ENCODE measurements at regions of chr4 and their contacts with region 1.

Region 1: DNA sequence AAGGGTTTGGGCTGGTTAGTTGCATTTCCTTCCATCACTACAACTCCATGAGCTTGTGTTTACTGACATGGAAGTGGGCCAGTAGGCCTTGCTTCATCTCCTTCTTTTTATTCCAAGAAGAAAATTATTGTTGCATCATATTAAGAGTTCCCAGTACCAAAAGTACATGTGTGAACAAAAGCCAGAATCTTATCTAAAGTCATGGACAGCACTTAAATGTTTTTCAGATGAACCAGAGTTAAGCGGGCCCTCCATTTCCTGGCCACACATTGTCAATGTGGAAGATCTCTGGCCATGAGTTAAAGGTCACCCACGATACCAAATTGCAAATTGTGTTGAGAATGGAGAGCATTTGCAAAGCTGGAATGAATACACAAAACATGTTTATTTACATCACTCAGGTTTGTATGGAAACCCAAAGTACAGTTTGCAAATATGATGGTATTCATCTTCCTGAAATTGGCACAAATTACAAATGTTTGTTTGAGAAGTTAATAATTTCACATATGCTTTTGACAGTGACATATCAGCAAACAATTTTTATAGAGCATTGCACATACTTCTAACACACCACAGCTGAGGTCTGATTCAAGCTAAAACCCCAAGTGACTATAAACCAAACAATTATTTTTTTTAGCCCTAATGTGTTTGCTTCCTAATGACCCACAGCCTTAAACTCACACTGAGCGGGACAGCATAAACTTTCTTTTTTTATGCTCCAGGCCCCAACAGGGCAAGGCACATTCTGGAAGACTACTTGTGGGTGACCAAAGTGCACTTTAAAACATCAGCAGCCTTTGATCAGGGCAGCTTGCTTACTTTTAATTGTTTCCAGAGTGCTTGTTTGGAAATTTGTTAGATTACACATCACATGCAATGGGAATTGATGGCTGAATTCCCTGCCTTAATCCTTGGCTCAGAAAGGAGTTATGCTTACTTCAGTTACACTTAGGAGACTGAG is 502.9 kb upstream of the SLIT2 start:
- DNase-seq: peak in 1 of 2 donors; percentile 51
- ATAC-seq: peak; percentile 65 to 87 (median 78)
- H3K4me3 ChIP-seq: no peak overlapping the region
- H3K27ac ChIP-seq: peak overlapping the region in 6 of 10 donors; percentile 5 to 65 (median 30)
- H3K4me1 ChIP-seq: peaks cover 0 to 15% (median 0%) of the 10 kb centered on the region in 9 donors
- H3K27me3 ChIP-seq: no peaks in the 10 kb centered on the region
- CTCF ChIP-seq: no peak

Region 2: DNA sequence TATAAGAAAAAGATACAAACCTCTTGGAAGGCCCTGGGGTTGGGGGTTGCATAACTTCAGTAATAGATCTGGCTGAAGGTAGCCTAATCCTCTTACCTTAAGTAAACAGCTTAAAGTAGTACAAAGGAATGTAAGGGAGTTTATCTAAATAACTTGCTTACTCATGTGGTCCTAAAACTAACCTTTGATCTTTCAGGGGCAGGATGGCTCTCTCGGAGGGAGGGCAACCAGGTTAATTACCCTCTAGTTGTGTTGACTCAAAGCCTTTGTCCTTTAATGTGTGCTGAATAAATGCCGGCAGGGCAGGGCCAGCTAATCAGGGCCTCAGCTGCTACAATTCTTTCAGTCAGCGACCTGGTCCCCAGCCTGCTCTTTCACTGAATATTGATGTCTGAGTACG is 319.1 kb before region 1 on chr4:
- intact Hi-C with region 1: no loop called
- DNase-seq: no peak
- ATAC-seq: no peak
- H3K4me3 ChIP-seq: no peak overlapping the region
- H3K27ac ChIP-seq: no peak overlapping the region
- H3K4me1 ChIP-seq: no peaks in the 10 kb centered on the region
- H3K27me3 ChIP-seq: no peaks in the 10 kb centered on the region
- CTCF ChIP-seq: no peak

Region 3: DNA sequence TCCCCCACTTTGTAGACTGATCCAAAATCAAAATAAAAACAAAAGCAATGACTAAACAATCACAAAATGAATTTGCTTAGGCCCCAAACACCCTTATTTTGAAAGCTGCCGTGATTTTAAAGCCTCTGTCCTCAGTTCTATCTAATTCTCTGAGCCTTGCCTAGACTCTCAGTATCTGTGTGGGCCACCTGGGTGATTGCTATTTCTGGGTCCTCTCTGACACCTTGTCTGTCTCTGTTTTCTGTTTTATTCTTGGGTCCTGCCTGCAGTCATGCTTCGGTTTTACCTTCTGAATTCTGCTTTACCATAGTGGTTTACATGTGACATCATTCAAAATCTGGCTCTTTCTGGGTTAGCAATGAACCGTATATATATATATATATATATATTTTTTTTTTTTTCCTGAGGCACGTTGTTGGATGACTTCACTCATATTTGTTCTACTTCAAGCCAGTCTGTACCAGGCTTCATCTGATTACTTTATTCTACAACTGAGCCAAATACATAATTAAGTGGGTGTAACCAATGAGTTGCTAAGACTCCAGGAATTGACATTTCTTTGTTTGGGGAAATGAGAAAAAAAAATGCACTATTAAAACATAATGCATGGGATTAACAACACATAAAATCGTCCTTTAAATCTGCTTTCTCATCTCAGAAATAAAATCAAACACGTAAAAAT is 207.8 kb before region 1 on chr4:
- intact Hi-C with region 1: loop called in 1 of 10 experiments (anchors 10 kb)
- DNase-seq: no peak
- ATAC-seq: no peak
- H3K4me3 ChIP-seq: no peak overlapping the region
- H3K27ac ChIP-seq: no peak overlapping the region
- H3K4me1 ChIP-seq: no peaks in the 10 kb centered on the region
- H3K27me3 ChIP-seq: no peaks in the 10 kb centered on the region
- CTCF ChIP-seq: no peak

Region 4: GRCh38 chr4:19711871-19712270 is 36.9 kb before region 1 on chr4:
- intact Hi-C with region 1: loop called in 1 of 10 experiments (anchors 2 kb)
- DNase-seq: no peak
- ATAC-seq: no peak
- H3K4me3 ChIP-seq: no peak overlapping the region
- H3K27ac ChIP-seq: no peak overlapping the region
- H3K4me1 ChIP-seq: no peaks in the 10 kb centered on the region
- H3K27me3 ChIP-seq: no peaks in the 10 kb centered on the region
- CTCF ChIP-seq: no peak

Measured in heart right ventricle (tissue), 16 donors.